Heart right ventricle (tissue), 16 donors: ENCODE measurements at regions of chr15 and their contacts with region 1.

Region 1: GRCh38 chr15:62665449-62665848 is 377.1 kb upstream of the TPM1 start:
- DNase-seq: no peak
- ATAC-seq: peak in 3 of 8 donors; percentile 53 to 54 (median 53)
- H3K4me3 ChIP-seq: no peak overlapping the region
- H3K27ac ChIP-seq: peak overlapping the region in 2 of 10 donors; percentile 5 to 59
- H3K4me1 ChIP-seq: peaks cover 0 to 10% (median 0%) of the 10 kb centered on the region in 9 donors
- H3K27me3 ChIP-seq: no peaks in the 10 kb centered on the region
- CTCF ChIP-seq: no peak

Region 2: GRCh38 chr15:62618432-62618831 is 47.0 kb before region 1 on chr15:
- intact Hi-C with region 1: loop called in 1 of 10 experiments (anchors 10 kb)
- DNase-seq: no peak
- ATAC-seq: no peak
- H3K4me3 ChIP-seq: no peak overlapping the region
- H3K27ac ChIP-seq: no peak overlapping the region
- H3K4me1 ChIP-seq: peaks cover 0 to 18% (median 9%) of the 10 kb centered on the region in 9 donors
- H3K27me3 ChIP-seq: no peaks in the 10 kb centered on the region
- CTCF ChIP-seq: no peak

Region 3: DNA sequence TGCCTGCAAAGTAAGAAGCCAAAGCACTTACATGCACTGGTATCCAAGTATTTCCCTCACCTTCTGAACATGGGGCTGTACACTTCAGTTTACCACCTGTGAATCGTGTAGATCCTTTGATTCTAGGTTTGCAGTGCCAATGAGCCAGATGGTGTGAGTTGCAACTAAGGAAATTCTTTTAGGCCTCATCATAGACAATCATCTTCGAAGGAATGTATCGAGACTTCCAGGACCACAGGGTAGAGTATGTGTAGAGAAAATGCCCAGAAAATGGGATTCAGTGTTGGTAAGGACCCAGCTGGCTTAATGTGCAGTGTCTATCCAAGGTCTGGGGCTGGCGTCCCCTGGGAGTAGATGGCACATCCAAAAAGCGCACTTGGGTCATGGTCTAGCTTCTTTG is 53.9 kb after region 1 on chr15:
- intact Hi-C with region 1: no loop called
- DNase-seq: no peak
- ATAC-seq: no peak
- H3K4me3 ChIP-seq: no peak overlapping the region
- H3K27ac ChIP-seq: no peak overlapping the region
- H3K4me1 ChIP-seq: no peaks in the 10 kb centered on the region
- H3K27me3 ChIP-seq: no peaks in the 10 kb centered on the region
- CTCF ChIP-seq: no peak